Activated B cell treated with CpG ODN at 0.5 μM for 24 hours (primary cell): ENCODE measurements at regions of chr3 and their contacts with region 1.

Region 1: DNA sequence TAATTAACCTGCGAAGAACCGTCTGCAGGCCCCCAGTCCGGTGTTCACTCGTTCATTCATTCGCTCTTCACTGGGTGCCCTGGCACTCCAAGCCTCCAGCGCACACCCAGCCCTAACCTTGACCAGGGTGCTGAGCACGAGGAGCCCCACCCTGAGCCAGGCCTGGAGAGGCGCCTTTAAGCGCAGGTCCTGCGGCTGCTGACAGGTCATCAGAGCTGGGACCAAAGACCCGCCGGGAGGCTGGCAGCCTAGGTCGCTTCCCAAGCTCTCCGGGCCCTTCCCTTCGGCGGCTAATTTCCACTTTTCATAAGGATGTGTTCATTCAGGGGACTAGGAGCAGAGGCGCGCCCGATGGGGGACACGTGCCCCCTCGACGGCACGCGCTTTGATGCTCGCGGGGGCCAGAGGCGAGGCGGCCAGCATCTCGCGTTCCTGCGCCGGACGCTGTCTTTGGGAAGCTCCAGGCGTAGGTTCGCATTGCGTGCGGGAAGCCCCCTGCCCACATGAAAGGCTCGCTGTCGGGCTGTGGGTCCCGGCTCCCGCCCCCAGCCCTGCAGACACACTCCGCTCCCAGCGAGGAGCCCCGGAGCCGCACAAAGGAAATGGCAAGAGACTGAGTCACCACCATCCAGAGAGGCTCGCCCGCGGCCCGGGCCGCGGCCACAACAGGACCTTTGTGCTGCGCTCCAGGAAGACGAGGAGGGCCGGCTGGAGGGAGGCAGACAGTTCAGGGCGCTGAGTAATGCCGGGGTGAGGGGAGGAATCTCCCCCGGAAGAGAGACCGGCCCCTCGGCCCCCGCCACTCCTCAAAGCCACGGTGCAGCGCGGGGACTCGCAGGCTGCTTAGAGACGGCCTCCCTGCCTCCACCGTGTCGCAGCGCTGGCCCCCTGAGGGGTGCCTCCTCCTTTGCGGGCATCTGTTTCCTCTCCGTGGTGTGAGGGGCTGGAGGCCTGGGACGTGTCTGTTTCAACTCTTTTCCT is 266.4 kb upstream of the HES1 start:
- DNase-seq: no peak
- ATAC-seq: peak; percentile 9
- H3K4me3 Mint-ChIP-seq: peak overlapping the region; percentile 71
- H3K27ac Mint-ChIP-seq: no peak overlapping the region
- H3K4me1 Mint-ChIP-seq: peaks cover 85% of the 10 kb centered on the region
- H3K27me3 Mint-ChIP-seq: no peaks in the 10 kb centered on the region
- CTCF ChIP-seq: no peak

Region 2: GRCh38 chr3:193509103-193509965 is 360.2 kb before region 1 on chr3:
- CTCF ChIA-PET with region 1: no interaction called
- POLR2A ChIA-PET with region 1: no interaction called
- intact Hi-C with region 1: no loop called
- DNase-seq: no peak
- ATAC-seq: no peak
- H3K4me3 Mint-ChIP-seq: no peak overlapping the region
- H3K27ac Mint-ChIP-seq: no peak overlapping the region
- H3K4me1 Mint-ChIP-seq: no peaks in the 10 kb centered on the region
- H3K27me3 Mint-ChIP-seq: no peaks in the 10 kb centered on the region
- CTCF ChIP-seq: no peak

Region 3: DNA sequence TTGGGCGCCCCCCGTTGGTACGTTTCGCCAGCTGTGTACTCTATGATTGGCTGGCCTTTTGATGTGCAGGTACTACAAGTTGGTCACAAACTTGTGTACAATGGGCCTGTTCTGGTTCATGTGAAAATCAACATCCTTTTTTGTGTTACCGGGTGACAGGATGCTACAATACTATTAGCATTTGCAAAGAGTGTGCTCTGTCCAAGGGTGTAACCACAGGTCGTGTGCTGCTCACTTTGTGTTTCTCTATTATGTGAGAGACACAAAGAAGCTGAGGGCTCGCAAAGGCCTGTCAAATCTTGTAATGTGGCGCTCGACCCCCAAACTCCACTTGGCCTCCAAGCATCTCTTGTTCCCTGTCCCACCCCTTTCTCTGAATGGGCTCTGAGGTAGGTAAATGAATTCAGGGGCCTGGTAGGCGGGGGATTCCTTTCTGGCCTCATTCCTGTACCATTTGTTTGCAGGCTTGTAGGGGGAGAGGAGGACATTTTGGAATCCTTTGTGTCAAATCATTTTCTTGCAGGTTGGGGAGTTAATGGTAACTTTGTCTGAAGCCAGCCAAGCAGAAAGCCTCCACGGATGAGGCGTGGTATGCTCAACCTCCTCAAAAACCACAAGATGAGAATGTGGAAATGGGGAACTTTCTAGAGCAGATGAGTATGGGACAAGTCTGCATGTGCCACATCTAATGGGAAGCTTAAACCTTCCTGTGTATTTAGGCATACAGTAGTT is 167.4 kb before region 1 on chr3:
- CTCF ChIA-PET with region 1: no interaction called
- POLR2A ChIA-PET with region 1: no interaction called
- intact Hi-C with region 1: loop called (anchors 5 kb)
- DNase-seq: no peak
- ATAC-seq: peak; percentile 73
- H3K4me3 Mint-ChIP-seq: no peak overlapping the region
- H3K27ac Mint-ChIP-seq: peak overlapping the region; percentile 27
- H3K4me1 Mint-ChIP-seq: peaks cover 32% of the 10 kb centered on the region
- H3K27me3 Mint-ChIP-seq: no peaks in the 10 kb centered on the region
- CTCF ChIP-seq: no peak

Region 4: GRCh38 chr3:193788189-193788991 is 81.1 kb before region 1 on chr3:
- CTCF ChIA-PET with region 1: no interaction called
- POLR2A ChIA-PET with region 1: no interaction called
- intact Hi-C with region 1: loop called (anchors 1 kb)
- DNase-seq: peak; percentile 36
- ATAC-seq: peak; percentile 98
- H3K4me3 Mint-ChIP-seq: no peak overlapping the region
- H3K27ac Mint-ChIP-seq: peak overlapping the region; percentile 15
- H3K4me1 Mint-ChIP-seq: peaks cover 16% of the 10 kb centered on the region
- H3K27me3 Mint-ChIP-seq: peaks cover 25% of the 10 kb centered on the region
- CTCF ChIP-seq: peak; percentile 34

Region 5: GRCh38 chr3:193831495-193832455 is 37.7 kb before region 1 on chr3:
- CTCF ChIA-PET with region 1: no interaction called
- POLR2A ChIA-PET with region 1: interaction called, 3 read pairs
- intact Hi-C with region 1: loop called (anchors 2 kb)
- DNase-seq: no peak
- ATAC-seq: peak; percentile 85
- H3K4me3 Mint-ChIP-seq: peak overlapping the region; percentile 48
- H3K27ac Mint-ChIP-seq: peak overlapping the region; percentile 87
- H3K4me1 Mint-ChIP-seq: peaks cover 40% of the 10 kb centered on the region
- H3K27me3 Mint-ChIP-seq: peaks cover 4% of the 10 kb centered on the region
- CTCF ChIP-seq: no peak

Region 6: GRCh38 chr3:193842029-193842798 is 27.3 kb before region 1 on chr3:
- CTCF ChIA-PET with region 1: no interaction called
- POLR2A ChIA-PET with region 1: no interaction called
- intact Hi-C with region 1: loop called (anchors 1 kb)
- DNase-seq: peak; percentile 24
- ATAC-seq: peak; percentile 91
- H3K4me3 Mint-ChIP-seq: peak overlapping the region; percentile 72
- H3K27ac Mint-ChIP-seq: peak overlapping the region; percentile 81
- H3K4me1 Mint-ChIP-seq: peaks cover 42% of the 10 kb centered on the region
- H3K27me3 Mint-ChIP-seq: peaks cover 2% of the 10 kb centered on the region
- CTCF ChIP-seq: no peak

Region 7: GRCh38 chr3:194003125-194004057 is 133.9 kb after region 1 on chr3:
- CTCF ChIA-PET with region 1: no interaction called
- POLR2A ChIA-PET with region 1: no interaction called
- intact Hi-C with region 1: loop called (anchors 2 kb)
- DNase-seq: peak; percentile 70
- ATAC-seq: peak; percentile 94
- H3K4me3 Mint-ChIP-seq: peak overlapping the region; percentile 76
- H3K27ac Mint-ChIP-seq: peak overlapping the region; percentile 65
- H3K4me1 Mint-ChIP-seq: peaks cover 40% of the 10 kb centered on the region
- H3K27me3 Mint-ChIP-seq: peaks cover 6% of the 10 kb centered on the region
- CTCF ChIP-seq: no peak

Region 8: DNA sequence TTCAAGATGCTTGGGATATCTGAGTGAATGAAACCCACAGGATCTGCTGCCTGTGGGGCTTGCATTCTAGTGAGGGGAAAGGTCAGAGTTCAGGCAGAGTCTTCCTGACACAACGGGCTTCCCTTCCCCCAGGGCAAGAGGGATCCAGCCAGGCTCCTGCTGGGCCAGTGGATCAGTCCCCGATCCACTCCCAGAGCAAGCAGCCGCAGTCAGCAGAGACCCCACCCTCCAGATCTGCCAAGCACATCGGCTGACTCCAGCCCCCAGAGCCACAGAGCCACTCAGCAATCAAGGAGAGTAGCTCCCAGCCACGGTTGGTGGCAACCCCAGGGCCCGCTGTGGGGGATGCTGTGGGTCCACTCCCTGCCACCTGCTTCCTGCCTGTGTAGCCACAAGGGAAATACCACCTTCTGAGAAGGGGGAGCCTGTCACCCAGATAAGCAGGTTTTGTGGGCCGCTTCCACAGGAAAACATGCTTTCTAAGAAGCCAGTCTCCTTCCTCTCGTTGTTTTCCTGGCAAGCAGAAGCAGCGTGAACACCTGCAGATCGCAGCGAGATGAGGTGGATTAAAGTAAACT is 436.7 kb after region 1 on chr3:
- CTCF ChIA-PET with region 1: no interaction called
- POLR2A ChIA-PET with region 1: interaction called, 4 read pairs
- intact Hi-C with region 1: loop called (anchors 2 kb)
- DNase-seq: peak; percentile 51
- ATAC-seq: peak; percentile 61
- H3K4me3 Mint-ChIP-seq: peak overlapping the region; percentile 70
- H3K27ac Mint-ChIP-seq: peak overlapping the region; percentile 84
- H3K4me1 Mint-ChIP-seq: no peaks in the 10 kb centered on the region
- H3K27me3 Mint-ChIP-seq: no peaks in the 10 kb centered on the region
- CTCF ChIP-seq: no peak